ENCODE measurements at regions of chr1 and their contacts with region 1.

Region 1: GRCh38 chr1:21261551-21262281 is 28.5 kb downstream of the ECE1 start:
- DNase-seq: peak; percentile 96
- H3K4me3 ChIP-seq: no peak overlapping the region
- H3K27ac ChIP-seq: peak overlapping the region; percentile 92
- H3K4me1 ChIP-seq: peaks cover 54% of the 10 kb centered on the region
- H3K27me3 ChIP-seq: no peaks in the 10 kb centered on the region
- CTCF ChIP-seq: no peak
- POLR2A ChIP-seq: peak; percentile 44

Region 2: GRCh38 chr1:21280011-21280471 is 18.3 kb after region 1 on chr1:
- CTCF ChIA-PET with region 1: interaction called, 14 read pairs
- POLR2A ChIA-PET with region 1: interaction called, 8 read pairs
- dilution Hi-C with region 1: no loop called
- intact Hi-C with region 1: loop called (anchors 1 kb)
- DNase-seq: peak; percentile 92
- H3K4me3 ChIP-seq: peak overlapping the region in 1 of 3 experiments; percentile 68
- H3K27ac ChIP-seq: peak overlapping the region; percentile 98
- H3K4me1 ChIP-seq: peaks cover 64% of the 10 kb centered on the region
- H3K27me3 ChIP-seq: no peaks in the 10 kb centered on the region
- CTCF ChIP-seq: no peak
- POLR2A ChIP-seq: peak; percentile 40

Region 3: DNA sequence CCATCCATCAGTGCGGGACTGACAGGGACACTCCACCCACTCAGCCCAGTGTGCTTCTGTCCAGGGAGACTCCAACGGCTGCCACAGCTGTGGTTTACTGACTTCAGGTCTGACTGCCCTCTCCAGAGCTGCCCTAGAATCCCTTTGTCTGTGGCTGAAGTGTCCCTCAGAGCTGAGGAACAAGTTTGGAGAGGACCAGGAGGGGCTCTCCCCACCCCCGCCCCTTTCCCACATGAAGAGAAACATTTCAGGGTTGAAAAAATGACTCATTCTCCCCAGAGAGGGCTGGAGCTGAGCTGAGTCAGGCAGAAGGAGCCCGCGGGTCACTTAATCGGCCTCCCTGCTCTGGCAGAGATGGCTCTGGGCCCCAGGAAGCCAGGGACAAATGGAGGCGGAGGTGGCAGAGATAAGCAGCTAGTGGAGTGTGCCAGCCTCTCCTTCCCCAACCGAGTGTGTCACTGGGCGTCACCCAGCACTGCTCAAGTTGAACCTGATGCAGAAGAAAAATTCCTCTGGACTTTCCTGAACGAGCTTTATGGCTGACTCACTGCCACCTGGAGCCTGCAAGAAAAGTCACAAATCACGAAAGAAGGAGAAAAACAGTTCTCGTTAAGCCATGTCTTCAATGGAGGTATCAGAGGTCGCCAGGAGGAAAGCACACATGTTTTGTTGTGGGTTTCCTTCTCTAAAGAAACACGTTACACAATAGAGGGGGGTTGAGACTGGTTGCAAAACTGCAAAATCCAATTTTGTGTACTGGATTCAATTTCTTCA is 62.8 kb after region 1 on chr1:
- CTCF ChIA-PET with region 1: interaction called, 14 read pairs
- POLR2A ChIA-PET with region 1: interaction called, 6 read pairs
- dilution Hi-C with region 1: no loop called
- intact Hi-C with region 1: no loop called
- DNase-seq: peak; percentile 93
- H3K4me3 ChIP-seq: no peak overlapping the region
- H3K27ac ChIP-seq: peak overlapping the region; percentile 96
- H3K4me1 ChIP-seq: peaks cover 62% of the 10 kb centered on the region
- H3K27me3 ChIP-seq: no peaks in the 10 kb centered on the region
- CTCF ChIP-seq: no peak
- POLR2A ChIP-seq: peak; percentile 39

Region 4: GRCh38 chr1:21334214-21335087 is 72.7 kb after region 1 on chr1:
- CTCF ChIA-PET with region 1: interaction called, 11 read pairs
- POLR2A ChIA-PET with region 1: interaction called, 3 read pairs
- dilution Hi-C with region 1: no loop called
- intact Hi-C with region 1: loop called (anchors 1 kb)
- DNase-seq: peak; percentile 75
- H3K4me3 ChIP-seq: peak overlapping the region in 1 of 3 experiments; percentile 10
- H3K27ac ChIP-seq: peak overlapping the region; percentile 81
- H3K4me1 ChIP-seq: peaks cover 73% of the 10 kb centered on the region
- H3K27me3 ChIP-seq: no peaks in the 10 kb centered on the region
- CTCF ChIP-seq: peak; percentile 82 to 89
- POLR2A ChIP-seq: peak; percentile 43

Region 5: DNA sequence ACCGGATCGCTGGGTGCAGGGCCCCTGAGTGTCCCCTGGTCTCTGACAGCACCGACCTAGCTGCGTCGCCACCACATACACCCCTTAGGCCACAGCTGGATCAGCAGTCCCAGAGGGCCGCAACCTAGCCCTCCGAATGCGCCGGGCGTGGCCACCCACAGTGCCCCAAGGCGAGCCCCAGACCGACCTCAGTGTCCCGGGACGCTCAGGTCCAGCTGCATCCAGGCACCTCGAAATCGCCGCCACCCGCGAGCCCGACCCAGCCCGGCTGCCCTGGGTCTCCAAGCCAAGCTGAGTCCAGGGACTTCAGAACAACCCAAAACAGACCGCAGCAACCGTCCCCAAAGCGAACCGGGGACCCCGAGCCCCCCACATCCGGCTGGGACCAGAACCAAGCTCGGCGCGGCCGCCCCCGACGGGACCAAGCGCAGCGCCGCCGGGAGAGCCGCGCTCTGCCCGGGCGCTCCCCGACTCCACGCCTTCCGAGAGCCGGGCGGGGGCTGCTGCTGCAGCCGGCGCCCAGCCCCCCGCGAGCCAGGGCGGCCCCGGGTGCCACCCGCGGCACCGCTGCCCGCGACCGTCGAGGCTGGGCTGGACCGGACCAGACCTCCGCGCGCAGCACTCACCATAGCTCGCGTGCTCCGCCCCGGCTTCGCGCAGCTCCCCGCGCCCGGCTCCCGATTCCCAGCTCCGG is 83.2 kb after region 1 on chr1:
- CTCF ChIA-PET with region 1: interaction called, 29 read pairs
- POLR2A ChIA-PET with region 1: no interaction called
- dilution Hi-C with region 1: no loop called
- intact Hi-C with region 1: loop called (anchors 1 kb)
- DNase-seq: no peak
- H3K4me3 ChIP-seq: peak overlapping the region; percentile 40 to 82 (median 66)
- H3K27ac ChIP-seq: peak overlapping the region; percentile 14
- H3K4me1 ChIP-seq: peaks cover 38% of the 10 kb centered on the region
- H3K27me3 ChIP-seq: no peaks in the 10 kb centered on the region
- CTCF ChIP-seq: no peak
- POLR2A ChIP-seq: no peak

Region 6: GRCh38 chr1:21659099-21659923 is 397.6 kb after region 1 on chr1:
- CTCF ChIA-PET with region 1: no interaction called
- POLR2A ChIA-PET with region 1: interaction called, 11 read pairs
- dilution Hi-C with region 1: no loop called
- intact Hi-C with region 1: no loop called
- DNase-seq: peak; percentile 70
- H3K4me3 ChIP-seq: no peak overlapping the region
- H3K27ac ChIP-seq: no peak overlapping the region
- H3K4me1 ChIP-seq: no peaks in the 10 kb centered on the region
- H3K27me3 ChIP-seq: peaks cover 7% of the 10 kb centered on the region in 2 experiments
- CTCF ChIP-seq: peak; percentile 87 to 92
- POLR2A ChIP-seq: no peak